ENCODE measurements at regions of chr15 and their contacts with region 1.

Region 1: DNA sequence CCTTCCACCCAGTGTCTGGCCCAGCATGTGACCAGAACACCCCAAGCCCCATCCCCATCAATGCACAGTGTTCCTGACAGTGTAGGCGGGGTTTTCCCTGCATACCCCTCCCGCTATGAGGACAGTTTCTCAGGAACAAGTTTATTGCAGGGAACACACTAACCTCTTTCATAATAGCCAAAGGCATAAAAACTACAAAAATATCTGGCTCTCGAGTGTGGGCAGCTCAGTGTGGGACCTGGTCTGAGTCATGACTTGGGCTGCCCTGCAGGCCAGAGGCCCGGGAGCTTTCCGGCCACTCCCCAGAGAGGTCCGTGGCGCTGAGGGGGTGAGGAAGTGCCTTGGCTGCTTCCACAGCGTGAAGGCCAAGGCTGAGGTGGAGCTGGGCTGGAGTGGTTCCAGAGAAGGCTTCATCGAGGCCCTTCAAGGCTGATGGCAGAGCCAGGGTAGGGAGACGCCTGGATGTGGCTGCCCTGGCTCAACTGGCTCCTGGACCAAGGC is 5.9 kb downstream of the ISLR start:
- DNase-seq: peak; percentile 95 to 96
- ATAC-seq: peak; percentile 91
- H3K4me3 ChIP-seq: no peak overlapping the region
- H3K27ac ChIP-seq: peak overlapping the region in 1 of 2 donors; percentile 54
- H3K4me1 ChIP-seq: no peaks in the 10 kb centered on the region
- H3K27me3 ChIP-seq: no peaks in the 10 kb centered on the region

Region 2: GRCh38 chr15:74134387-74135027 is 44.9 kb before region 1 on chr15:
- intact Hi-C with region 1: loop called in 1 of 2 experiments (anchors 2 kb)
- DNase-seq: peak; percentile 79 to 85
- ATAC-seq: no peak
- H3K4me3 ChIP-seq: no peak overlapping the region
- H3K27ac ChIP-seq: no peak overlapping the region
- H3K4me1 ChIP-seq: no peaks in the 10 kb centered on the region
- H3K27me3 ChIP-seq: peaks cover 0 to 4% of the 10 kb centered on the region in 2 donors

Region 3: DNA sequence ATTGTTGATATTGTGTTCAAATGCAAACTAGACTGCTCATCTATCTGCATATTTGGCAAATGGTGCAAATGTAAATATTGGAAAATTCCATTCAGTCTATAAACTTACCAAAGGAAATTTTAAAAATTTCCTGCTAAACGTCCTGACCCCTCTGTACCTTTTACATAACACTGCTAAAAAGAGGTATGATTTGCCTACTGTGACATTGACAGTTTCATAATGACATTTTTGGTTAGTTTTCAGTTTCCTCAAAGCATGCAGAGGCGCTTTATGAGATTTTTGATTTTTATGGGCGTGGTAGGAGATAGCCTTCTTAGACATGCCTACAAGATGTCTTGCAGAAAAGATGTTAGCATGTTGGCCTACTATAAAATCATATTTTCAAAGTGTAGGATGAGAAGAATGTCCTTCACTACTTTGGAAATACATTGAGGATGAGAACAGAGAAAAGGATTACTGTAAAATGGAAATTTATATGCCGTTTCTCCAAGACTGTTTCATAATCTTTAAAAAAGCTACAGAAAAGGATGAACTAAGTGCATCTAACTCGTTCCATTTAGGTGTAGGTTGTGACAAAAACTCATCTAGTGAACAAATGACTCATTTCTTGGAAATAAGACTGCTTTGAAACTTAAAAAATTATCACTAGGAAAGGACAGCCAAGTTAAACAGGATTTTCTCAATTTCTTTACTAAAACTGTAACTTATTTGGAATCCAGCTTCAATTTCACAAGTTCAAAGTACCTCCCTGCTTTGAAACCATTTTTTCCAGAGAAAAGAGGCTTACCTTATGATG is 20.3 kb before region 1 on chr15:
- intact Hi-C with region 1: loop called in 1 of 2 experiments (anchors 2 kb)
- DNase-seq: no peak
- ATAC-seq: no peak
- H3K4me3 ChIP-seq: no peak overlapping the region
- H3K27ac ChIP-seq: no peak overlapping the region
- H3K4me1 ChIP-seq: peaks cover 0 to 2% of the 10 kb centered on the region in 2 donors
- H3K27me3 ChIP-seq: no peaks in the 10 kb centered on the region

Region 4: DNA sequence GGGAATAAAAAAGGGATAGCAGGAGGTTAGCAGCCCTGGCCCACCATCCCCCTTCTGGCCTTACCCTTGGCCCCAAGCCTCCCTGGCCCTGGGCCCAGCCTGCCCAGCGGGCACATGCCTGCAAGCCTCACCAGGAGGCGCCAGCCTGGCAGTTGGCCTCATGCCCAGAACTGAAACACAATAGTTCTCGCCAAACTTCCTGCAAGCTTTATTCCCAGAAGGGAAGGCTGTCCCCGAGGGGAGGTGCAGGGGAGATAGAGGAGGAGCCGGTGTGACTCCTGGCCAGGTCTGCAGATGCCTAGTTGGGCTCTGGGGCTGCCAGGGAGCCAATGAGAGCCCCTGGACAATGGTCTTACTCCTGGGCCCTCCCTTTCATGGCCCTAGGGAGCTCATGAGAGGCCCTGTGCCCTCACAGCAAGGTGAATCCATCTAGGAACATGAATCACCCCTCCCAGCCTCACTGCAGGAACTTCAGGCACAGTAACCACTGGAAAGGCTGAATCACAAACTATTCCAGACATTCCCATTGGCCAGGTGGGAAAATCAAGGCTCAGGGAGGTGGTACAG is 60.7 kb after region 1 on chr15:
- intact Hi-C with region 1: loop called in 1 of 2 experiments (anchors 1 kb)
- DNase-seq: peak; percentile 94
- ATAC-seq: peak; percentile 79
- H3K4me3 ChIP-seq: no peak overlapping the region
- H3K27ac ChIP-seq: no peak overlapping the region
- H3K4me1 ChIP-seq: no peaks in the 10 kb centered on the region
- H3K27me3 ChIP-seq: no peaks in the 10 kb centered on the region

Measured in aorta (tissue), 5 donors.